ENCODE measurements at regions of chr15 and their contacts with region 1.

Region 1: DNA sequence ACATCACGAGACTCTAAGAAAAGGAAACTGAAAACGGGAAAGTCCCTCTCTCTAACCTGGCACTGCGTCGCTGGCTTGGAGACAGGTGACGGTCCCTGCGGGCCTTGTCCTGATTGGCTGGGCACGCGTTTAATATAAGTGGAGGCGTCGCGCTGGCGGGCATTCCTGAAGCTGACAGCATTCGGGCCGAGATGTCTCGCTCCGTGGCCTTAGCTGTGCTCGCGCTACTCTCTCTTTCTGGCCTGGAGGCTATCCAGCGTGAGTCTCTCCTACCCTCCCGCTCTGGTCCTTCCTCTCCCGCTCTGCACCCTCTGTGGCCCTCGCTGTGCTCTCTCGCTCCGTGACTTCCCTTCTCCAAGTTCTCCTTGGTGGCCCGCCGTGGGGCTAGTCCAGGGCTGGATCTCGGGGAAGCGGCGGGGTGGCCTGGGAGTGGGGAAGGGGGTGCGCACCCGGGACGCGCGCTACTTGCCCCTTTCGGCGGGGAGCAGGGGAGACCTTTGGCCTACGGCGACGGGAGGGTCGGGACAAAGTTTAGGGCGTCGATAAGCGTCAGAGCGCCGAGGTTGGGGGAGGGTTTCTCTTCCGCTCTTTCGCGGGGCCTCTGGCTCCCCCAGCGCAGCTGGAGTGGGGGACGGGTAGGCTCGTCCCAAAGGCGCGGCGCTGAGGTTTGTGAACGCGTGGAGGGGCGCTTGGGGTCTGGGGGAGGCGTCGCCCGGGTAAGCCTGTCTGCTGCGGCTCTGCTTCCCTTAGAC is at the start of gene B2M:
- DNase-seq: peak; percentile 96 to 98 (median 97)
- H3K4me3 ChIP-seq: peak within 1 kb of the TSS; percentile 94
- H3K4me3 Mint-ChIP-seq: peak within 1 kb of the TSS; percentile 90 to 100 (median 99)
- H3K27ac ChIP-seq: peak within 1 kb of the TSS; percentile 99
- H3K27ac Mint-ChIP-seq: peak within 1 kb of the TSS; percentile 100
- H3K4me1 ChIP-seq: peaks cover 38% of the 10 kb centered on the region
- H3K4me1 Mint-ChIP-seq: peaks cover 33 to 75% (median 49%) of the 10 kb centered on the region in 4 donors
- H3K27me3 ChIP-seq: no peaks in the 10 kb centered on the region
- H3K27me3 Mint-ChIP-seq: no peaks in the 10 kb centered on the region
- total RNA-seq, gene B2M: 7,421 to 7,929 TPM

Region 2: DNA sequence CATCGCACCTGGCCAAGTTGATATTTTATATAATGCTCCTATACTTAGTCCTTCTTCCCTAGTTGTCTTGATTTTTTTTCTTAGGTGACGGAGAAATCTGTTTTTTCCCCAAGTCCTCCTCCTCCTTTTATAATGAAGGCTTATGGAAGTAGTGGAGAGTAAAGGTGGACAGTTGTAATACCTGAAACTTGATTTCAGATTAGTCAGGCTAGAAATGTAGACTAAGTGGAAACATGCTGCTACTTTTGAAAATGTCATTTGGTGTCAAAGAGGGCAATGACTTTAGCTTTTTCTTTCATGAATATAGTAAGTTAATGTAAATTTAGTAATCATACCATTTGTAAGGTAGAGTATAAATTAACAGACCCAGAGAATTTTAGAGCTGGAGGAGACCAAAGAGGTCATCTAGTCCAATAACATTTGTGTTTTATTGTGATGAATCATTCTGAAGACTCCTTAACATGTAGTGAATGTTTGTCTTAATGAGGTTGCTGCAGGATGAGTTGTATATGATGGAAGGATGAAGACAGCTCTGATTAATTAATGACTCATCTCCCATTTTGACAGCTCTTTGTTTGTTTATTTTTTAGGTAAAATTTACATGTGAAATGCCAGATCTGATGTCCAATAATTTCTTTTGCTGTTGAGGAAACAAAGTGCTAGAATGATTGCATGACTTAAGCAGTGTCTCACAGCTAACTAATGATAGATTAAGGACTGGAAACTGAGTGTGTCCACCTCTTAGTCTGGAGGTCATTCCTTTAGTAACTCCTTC is 275.5 kb before region 1 on chr15:
- CTCF ChIA-PET with region 1: no interaction called
- POLR2A ChIA-PET with region 1: no interaction called
- intact Hi-C with region 1: no loop called
- DNase-seq: no peak
- H3K4me3 ChIP-seq: no peak overlapping the region
- H3K4me3 Mint-ChIP-seq: peak overlapping the region in 2 of 8 donors; percentile 5 to 32
- H3K27ac ChIP-seq: no peak overlapping the region
- H3K27ac Mint-ChIP-seq: peak overlapping the region in 1 of 7 donors; percentile 35
- H3K4me1 ChIP-seq: peaks cover 36% of the 10 kb centered on the region
- H3K4me1 Mint-ChIP-seq: peaks cover 37 to 69% (median 51%) of the 10 kb centered on the region in 4 donors
- H3K27me3 ChIP-seq: no peaks in the 10 kb centered on the region
- H3K27me3 Mint-ChIP-seq: no peaks in the 10 kb centered on the region

Region 3: GRCh38 chr15:44584162-44584749 is 127.3 kb before region 1 on chr15:
- CTCF ChIA-PET with region 1: interaction called, 4 read pairs
- POLR2A ChIA-PET with region 1: interaction called, 27 read pairs
- intact Hi-C with region 1: no loop called
- DNase-seq: peak; percentile 46 to 53 (median 52)
- H3K4me3 ChIP-seq: no peak overlapping the region
- H3K4me3 Mint-ChIP-seq: no peak overlapping the region
- H3K27ac ChIP-seq: no peak overlapping the region
- H3K27ac Mint-ChIP-seq: peak overlapping the region in 6 of 7 donors; percentile 12 to 86 (median 62)
- H3K4me1 ChIP-seq: peaks cover 2% of the 10 kb centered on the region
- H3K4me1 Mint-ChIP-seq: peaks cover 5 to 19% (median 12%) of the 10 kb centered on the region in 4 donors
- H3K27me3 ChIP-seq: no peaks in the 10 kb centered on the region
- H3K27me3 Mint-ChIP-seq: no peaks in the 10 kb centered on the region

Region 4: DNA sequence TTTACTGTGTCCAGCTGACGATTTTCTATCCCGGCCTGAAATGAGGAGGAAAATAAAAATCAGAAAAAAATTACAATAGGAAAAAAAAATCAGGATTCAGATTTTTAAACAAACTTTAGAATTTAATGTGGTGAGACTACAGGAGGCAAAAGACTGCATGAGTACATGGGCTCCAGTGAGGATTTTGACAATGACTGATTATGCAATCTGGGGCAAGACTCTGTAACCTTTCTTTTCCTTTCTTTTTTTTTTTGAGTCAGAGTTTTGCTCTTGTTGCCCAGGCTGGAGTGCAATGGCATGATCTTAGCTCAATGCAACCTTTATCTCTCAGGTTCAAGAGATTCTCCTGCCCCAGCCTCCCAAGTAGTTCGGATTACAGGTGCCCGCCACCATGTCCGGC is 77.9 kb before region 1 on chr15:
- CTCF ChIA-PET with region 1: no interaction called
- POLR2A ChIA-PET with region 1: interaction called, 10 read pairs
- intact Hi-C with region 1: no loop called
- DNase-seq: no peak
- H3K4me3 ChIP-seq: no peak overlapping the region
- H3K4me3 Mint-ChIP-seq: no peak overlapping the region
- H3K27ac ChIP-seq: no peak overlapping the region
- H3K27ac Mint-ChIP-seq: peak overlapping the region in 4 of 7 donors; percentile 9 to 69 (median 36)
- H3K4me1 ChIP-seq: no peaks in the 10 kb centered on the region
- H3K4me1 Mint-ChIP-seq: peaks cover 4 to 9% (median 7%) of the 10 kb centered on the region in 4 donors
- H3K27me3 ChIP-seq: no peaks in the 10 kb centered on the region
- H3K27me3 Mint-ChIP-seq: no peaks in the 10 kb centered on the region

Region 5: DNA sequence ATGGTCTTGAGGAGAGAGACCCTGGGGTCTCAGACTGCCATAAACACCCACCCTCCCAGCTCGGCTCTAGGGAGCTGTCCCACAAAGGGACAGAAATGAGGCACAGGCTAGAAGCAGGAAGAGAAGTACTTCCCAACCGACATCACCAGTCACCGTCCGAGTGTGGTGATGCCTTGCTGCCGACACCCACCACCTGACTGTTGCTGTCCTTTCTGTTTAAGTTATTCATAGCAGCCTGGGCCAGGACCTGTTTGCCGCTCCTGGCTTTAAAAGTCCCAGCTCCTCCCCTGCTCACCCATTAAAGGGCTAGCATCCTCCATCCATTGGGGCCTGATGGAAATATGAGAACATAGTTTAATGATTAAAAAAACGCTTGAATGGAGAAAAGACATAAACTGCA is 34.9 kb before region 1 on chr15:
- CTCF ChIA-PET with region 1: interaction called, 167 read pairs
- POLR2A ChIA-PET with region 1: interaction called, 5,737 read pairs
- intact Hi-C with region 1: loop called (anchors 1 kb)
- DNase-seq: peak in 1 of 5 donors; percentile 22
- H3K4me3 ChIP-seq: peak overlapping the region; percentile 10 to 23
- H3K4me3 Mint-ChIP-seq: peak overlapping the region; percentile 45 to 88 (median 82)
- H3K27ac ChIP-seq: peak overlapping the region; percentile 39
- H3K27ac Mint-ChIP-seq: peak overlapping the region; percentile 87 to 97 (median 95)
- H3K4me1 ChIP-seq: peaks cover 100% of the 10 kb centered on the region
- H3K4me1 Mint-ChIP-seq: peaks cover 67 to 95% (median 86%) of the 10 kb centered on the region in 4 donors
- H3K27me3 ChIP-seq: no peaks in the 10 kb centered on the region
- H3K27me3 Mint-ChIP-seq: no peaks in the 10 kb centered on the region

Region 6: GRCh38 chr15:44692659-44693058 is 18.9 kb before region 1 on chr15:
- CTCF ChIA-PET with region 1: interaction called, 167 read pairs
- POLR2A ChIA-PET with region 1: interaction called, 5,737 read pairs
- intact Hi-C with region 1: loop called (anchors 2 kb)
- DNase-seq: no peak
- H3K4me3 ChIP-seq: no peak overlapping the region
- H3K4me3 Mint-ChIP-seq: no peak overlapping the region
- H3K27ac ChIP-seq: no peak overlapping the region
- H3K27ac Mint-ChIP-seq: peak overlapping the region in 2 of 7 donors; percentile 17 to 42
- H3K4me1 ChIP-seq: peaks cover 25% of the 10 kb centered on the region
- H3K4me1 Mint-ChIP-seq: peaks cover 28 to 45% (median 38%) of the 10 kb centered on the region in 4 donors
- H3K27me3 ChIP-seq: no peaks in the 10 kb centered on the region
- H3K27me3 Mint-ChIP-seq: no peaks in the 10 kb centered on the region

Region 7: DNA sequence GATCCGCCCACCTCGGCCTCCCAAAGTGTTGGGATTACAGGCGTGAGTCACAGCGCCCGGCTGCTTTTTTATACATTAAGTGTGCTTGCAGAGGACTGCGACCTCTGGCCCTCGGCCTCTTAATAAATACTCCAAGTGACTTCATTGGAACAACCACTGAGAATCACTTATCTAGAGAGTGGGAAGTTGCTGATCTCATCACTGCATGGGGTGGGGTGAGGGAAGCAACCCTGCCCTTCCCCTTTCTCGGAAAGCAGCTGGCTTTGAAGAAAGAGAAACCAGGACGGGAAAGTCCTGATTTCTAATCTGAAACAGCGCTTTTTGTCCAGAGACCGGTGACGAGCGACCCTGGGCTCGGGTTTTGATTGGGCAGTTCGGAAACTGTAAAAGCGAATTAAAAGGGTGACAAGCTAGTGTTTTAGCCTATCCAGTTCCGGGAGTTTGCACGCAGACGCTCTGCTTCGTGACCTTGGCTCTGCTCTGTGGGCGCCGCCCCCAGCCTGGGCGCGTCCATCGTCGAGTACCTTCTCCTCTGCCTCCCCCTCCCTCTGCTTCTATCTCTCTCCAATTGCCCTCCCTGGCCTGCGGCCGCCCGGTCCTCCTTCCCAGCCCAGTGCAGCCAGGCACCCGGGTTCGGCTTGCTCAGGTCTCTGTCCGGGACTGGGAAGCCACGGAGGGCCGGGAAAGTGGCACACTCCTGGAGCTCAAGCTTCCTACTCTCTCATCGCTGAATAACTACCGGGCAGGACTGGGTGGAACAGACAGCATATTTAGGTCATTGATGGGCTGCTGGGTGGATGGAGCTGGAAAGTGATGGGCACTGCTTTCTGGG is 17.3 kb after region 1 on chr15:
- CTCF ChIA-PET with region 1: interaction called, 601 read pairs
- POLR2A ChIA-PET with region 1: interaction called, 3,006 read pairs
- intact Hi-C with region 1: loop called (anchors 1 kb)
- DNase-seq: peak; percentile 95 to 98 (median 97)
- H3K4me3 ChIP-seq: peak overlapping the region; percentile 74 to 99
- H3K4me3 Mint-ChIP-seq: peak overlapping the region; percentile 96 to 100 (median 99)
- H3K27ac ChIP-seq: peak overlapping the region; percentile 98
- H3K27ac Mint-ChIP-seq: peak overlapping the region; percentile 96 to 100 (median 99)
- H3K4me1 ChIP-seq: peaks cover 79% of the 10 kb centered on the region
- H3K4me1 Mint-ChIP-seq: peaks cover 47 to 91% (median 63%) of the 10 kb centered on the region in 4 donors
- H3K27me3 ChIP-seq: no peaks in the 10 kb centered on the region
- H3K27me3 Mint-ChIP-seq: no peaks in the 10 kb centered on the region